Caco-2 (cell line): ENCODE measurements at regions of chr16 and their contacts with region 1.

Region 1: DNA sequence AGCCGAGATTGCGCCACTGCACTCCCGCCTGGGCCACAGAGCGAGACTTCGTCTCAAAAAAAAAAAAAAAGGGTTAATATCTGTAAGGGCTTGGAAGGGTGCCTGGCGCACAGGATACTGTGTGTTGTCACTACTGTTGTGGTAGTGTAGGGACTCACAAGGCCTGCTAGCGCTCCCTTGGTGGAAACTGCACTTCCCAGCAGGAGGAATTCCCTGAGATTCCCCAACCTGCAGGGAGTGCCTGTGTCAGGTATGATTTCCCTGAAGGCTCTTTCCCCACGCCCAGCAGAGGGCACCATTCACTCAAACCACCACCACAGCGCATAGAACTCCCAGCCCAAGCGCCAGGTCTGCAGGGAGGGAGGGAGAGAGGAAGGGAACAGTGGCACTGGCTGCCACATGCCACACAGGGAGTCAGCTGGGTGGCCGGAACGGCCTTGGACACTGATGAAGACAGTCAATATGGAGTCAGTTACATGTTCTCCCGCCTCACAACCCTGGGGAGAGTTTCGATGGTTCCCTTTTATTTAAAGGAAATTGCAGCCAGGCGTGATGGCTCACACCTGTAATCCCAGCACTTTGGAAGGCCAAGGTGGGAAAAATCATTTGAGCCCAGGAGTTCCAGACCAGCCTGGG is 32.7 kb upstream of the CDH1 start:
- DNase-seq: peak; percentile 93 to 94
- H3K4me3 ChIP-seq: no peak overlapping the region
- H3K4me3 Mint-ChIP-seq: no peak overlapping the region
- H3K27ac Mint-ChIP-seq: peak overlapping the region; percentile 49
- H3K4me1 ChIP-seq: peaks cover 19% of the 10 kb centered on the region
- H3K4me1 Mint-ChIP-seq: peaks cover 21% of the 10 kb centered on the region
- H3K27me3 ChIP-seq: no peaks in the 10 kb centered on the region
- H3K27me3 Mint-ChIP-seq: no peaks in the 10 kb centered on the region
- CTCF ChIP-seq: peak; percentile 92 to 97

Region 2: DNA sequence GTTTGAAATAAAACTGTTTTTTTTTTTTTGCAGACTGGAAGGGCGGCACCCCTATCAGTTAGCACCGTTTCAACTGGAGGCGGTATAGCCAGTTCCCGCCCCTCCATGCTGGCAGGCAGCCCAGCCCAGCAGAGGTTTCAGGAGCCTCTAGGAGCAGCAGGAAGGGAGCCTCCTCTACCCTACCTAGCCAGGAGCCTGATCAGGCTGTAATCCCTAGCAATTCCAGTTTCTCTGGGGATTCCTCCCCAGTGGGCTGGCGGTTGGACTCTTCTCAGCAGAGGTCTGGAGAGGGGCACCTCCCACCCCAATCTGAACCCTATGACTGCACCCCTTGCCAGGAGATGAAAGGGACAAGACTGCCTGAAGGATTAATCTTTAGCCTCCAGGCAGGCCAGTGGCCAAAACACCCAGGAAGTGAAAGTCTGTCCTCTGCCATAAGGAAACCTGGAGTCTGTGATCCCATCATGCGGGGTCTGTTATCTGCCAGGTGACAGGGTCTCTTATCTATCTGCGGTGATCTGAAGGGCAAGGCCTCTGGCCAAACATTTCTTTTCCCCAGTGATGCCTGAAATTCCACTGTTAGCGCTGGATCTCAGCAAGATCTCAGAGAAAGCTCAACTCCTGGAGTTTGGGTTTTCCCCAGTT is 27.8 kb after region 1 on chr16:
- CTCF ChIA-PET with region 1: interaction called, 3 read pairs
- POLR2A ChIA-PET with region 1: interaction called, 5 read pairs
- intact Hi-C with region 1: loop called (anchors 1 kb)
- DNase-seq: peak; percentile 93 to 97
- H3K4me3 ChIP-seq: no peak overlapping the region
- H3K4me3 Mint-ChIP-seq: peak overlapping the region; percentile 62
- H3K27ac Mint-ChIP-seq: peak overlapping the region; percentile 94
- H3K4me1 ChIP-seq: peaks cover 34% of the 10 kb centered on the region
- H3K4me1 Mint-ChIP-seq: peaks cover 34% of the 10 kb centered on the region
- H3K27me3 ChIP-seq: no peaks in the 10 kb centered on the region
- H3K27me3 Mint-ChIP-seq: no peaks in the 10 kb centered on the region
- CTCF ChIP-seq: peak in 1 of 2 experiments; percentile 1

Region 3: DNA sequence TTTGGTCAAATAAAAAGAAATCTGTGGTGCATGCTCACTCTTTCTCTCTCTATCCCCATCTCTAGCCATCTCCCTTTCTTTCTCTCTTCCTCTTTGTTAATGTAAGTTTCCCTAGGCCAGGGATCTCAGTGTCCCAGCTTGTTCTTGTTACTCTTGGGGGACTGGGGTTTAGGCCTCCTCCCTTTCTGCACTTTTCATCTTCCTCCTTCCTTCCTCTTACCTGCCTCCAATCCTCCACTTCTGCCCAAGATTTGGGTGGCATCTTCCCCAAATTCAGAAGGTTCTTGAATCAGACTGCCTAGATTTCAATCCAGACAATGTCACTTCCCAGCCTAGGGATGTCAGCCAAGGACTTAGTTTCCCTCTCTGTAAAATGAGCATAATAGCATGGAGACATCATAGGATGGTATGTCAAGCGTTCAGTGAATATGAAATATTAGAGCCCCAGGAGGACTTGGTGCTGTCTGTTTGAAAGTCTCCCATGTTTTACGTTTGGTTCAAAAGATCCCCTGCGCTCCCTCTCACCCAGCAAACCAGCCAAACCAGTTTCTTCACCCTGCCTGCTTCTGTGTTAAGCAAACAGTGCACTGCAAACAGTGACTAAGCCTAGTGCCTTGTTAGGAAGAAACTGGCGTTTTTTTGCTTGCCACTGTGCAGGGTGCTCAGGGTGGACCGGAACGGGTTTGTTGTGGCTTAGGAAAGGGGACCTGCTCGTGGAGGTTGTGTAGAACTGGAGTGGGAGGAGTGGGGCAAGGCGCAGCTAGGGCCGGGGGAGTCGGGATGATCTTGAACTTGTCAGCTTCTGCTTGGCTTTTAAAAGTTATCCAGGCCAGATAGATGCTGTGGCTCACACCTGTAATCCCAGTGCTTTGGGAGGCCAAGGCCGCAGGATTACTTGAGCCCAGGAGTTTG is 40.3 kb after region 1 on chr16:
- CTCF ChIA-PET with region 1: interaction called, 3 read pairs
- POLR2A ChIA-PET with region 1: interaction called, 6 read pairs
- intact Hi-C with region 1: loop called (anchors 1 kb)
- DNase-seq: peak; percentile 96
- H3K4me3 ChIP-seq: peak overlapping the region; percentile 13; the same call in 1 of the 2 replicates
- H3K4me3 Mint-ChIP-seq: peak overlapping the region; percentile 70
- H3K27ac Mint-ChIP-seq: peak overlapping the region; percentile 93
- H3K4me1 ChIP-seq: peaks cover 92% of the 10 kb centered on the region
- H3K4me1 Mint-ChIP-seq: peaks cover 74% of the 10 kb centered on the region
- H3K27me3 ChIP-seq: no peaks in the 10 kb centered on the region
- H3K27me3 Mint-ChIP-seq: no peaks in the 10 kb centered on the region
- CTCF ChIP-seq: no peak

Region 4: DNA sequence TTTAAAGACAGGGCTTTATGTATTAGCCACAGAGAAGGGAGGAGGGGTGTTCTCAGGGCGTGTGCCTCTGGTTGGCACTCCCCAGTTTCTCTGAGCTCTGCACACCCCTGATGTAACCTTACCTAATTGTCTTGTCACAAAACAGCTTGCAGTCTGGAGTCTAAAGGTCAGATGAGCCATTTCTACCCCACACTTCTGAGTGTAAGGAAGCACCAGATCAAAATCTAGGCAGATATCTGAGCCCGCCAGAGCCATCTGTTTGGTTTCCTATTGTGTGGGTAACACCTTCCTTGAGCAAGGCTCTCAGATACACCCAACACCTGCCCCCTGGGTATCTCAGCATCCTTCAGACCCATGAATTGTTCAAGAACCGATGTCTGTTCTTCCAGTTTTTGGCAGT is 48.3 kb after region 1 on chr16:
- CTCF ChIA-PET with region 1: no interaction called
- POLR2A ChIA-PET with region 1: interaction called, 6 read pairs
- intact Hi-C with region 1: loop called (anchors 1 kb)
- DNase-seq: peak; percentile 61 to 66
- H3K4me3 ChIP-seq: no peak overlapping the region
- H3K4me3 Mint-ChIP-seq: peak overlapping the region; percentile 22
- H3K27ac Mint-ChIP-seq: peak overlapping the region; percentile 74
- H3K4me1 ChIP-seq: peaks cover 84% of the 10 kb centered on the region
- H3K4me1 Mint-ChIP-seq: peaks cover 56% of the 10 kb centered on the region
- H3K27me3 ChIP-seq: no peaks in the 10 kb centered on the region
- H3K27me3 Mint-ChIP-seq: no peaks in the 10 kb centered on the region
- CTCF ChIP-seq: no peak

Region 5: GRCh38 chr16:68778551-68779231 is 74.3 kb after region 1 on chr16:
- CTCF ChIA-PET with region 1: no interaction called
- POLR2A ChIA-PET with region 1: no interaction called
- intact Hi-C with region 1: loop called (anchors 1 kb)
- DNase-seq: peak in 1 of 2 experiments; percentile 53
- H3K4me3 ChIP-seq: no peak overlapping the region
- H3K4me3 Mint-ChIP-seq: no peak overlapping the region
- H3K27ac Mint-ChIP-seq: peak overlapping the region; percentile 71
- H3K4me1 ChIP-seq: peaks cover 36% of the 10 kb centered on the region
- H3K4me1 Mint-ChIP-seq: peaks cover 37% of the 10 kb centered on the region
- H3K27me3 ChIP-seq: no peaks in the 10 kb centered on the region
- H3K27me3 Mint-ChIP-seq: no peaks in the 10 kb centered on the region
- CTCF ChIP-seq: no peak

Region 6: GRCh38 chr16:68800257-68800875 is 96.0 kb after region 1 on chr16:
- CTCF ChIA-PET with region 1: interaction called, 3 read pairs
- POLR2A ChIA-PET with region 1: no interaction called
- intact Hi-C with region 1: loop called (anchors 1 kb)
- DNase-seq: peak; percentile 83 to 88
- H3K4me3 ChIP-seq: no peak overlapping the region
- H3K4me3 Mint-ChIP-seq: no peak overlapping the region
- H3K27ac Mint-ChIP-seq: peak overlapping the region; percentile 7
- H3K4me1 ChIP-seq: peaks cover 62% of the 10 kb centered on the region
- H3K4me1 Mint-ChIP-seq: peaks cover 18% of the 10 kb centered on the region
- H3K27me3 ChIP-seq: no peaks in the 10 kb centered on the region
- H3K27me3 Mint-ChIP-seq: no peaks in the 10 kb centered on the region
- CTCF ChIP-seq: peak; percentile 85 to 86

Region 7: GRCh38 chr16:68843482-68844210 is 139.3 kb after region 1 on chr16 and contains the start of gene TANGO6:
- CTCF ChIA-PET with region 1: no interaction called
- POLR2A ChIA-PET with region 1: no interaction called
- intact Hi-C with region 1: loop called (anchors 1 kb)
- DNase-seq: peak; percentile 88 to 91
- H3K4me3 ChIP-seq: peak within 1 kb of the TSS; percentile 91
- H3K4me3 Mint-ChIP-seq: peak within 1 kb of the TSS; percentile 70
- H3K27ac Mint-ChIP-seq: peak within 1 kb of the TSS; percentile 74
- H3K4me1 ChIP-seq: peaks cover 4% of the 10 kb centered on the region; the same call in 1 of the 2 replicates
- H3K4me1 Mint-ChIP-seq: peaks cover 6% of the 10 kb centered on the region
- H3K27me3 ChIP-seq: no peaks in the 10 kb centered on the region
- H3K27me3 Mint-ChIP-seq: no peaks in the 10 kb centered on the region
- CTCF ChIP-seq: peak; percentile 65 to 78
- total RNA-seq, gene TANGO6: 17.0 and 18.2 TPM in 2 replicates

Region 8: DNA sequence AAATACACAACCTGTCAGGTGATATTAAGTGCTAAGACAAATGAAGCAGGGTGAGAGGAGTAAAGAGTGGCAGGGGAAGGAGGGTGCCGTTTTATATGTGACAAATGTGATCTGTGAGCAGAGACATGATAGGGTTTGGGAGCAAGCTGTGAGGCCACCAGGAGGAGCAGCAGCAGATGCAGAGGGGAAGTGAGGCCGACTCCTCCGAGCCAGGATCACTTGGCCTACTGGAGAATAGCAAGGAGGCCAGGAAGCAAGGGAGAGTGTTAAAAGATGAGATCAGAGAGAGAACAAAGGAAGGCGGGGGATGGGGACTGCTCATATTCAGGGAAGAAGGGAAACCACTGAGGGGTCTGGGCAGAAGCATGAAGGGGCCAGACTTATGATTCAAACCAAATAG is 268.4 kb after region 1 on chr16:
- CTCF ChIA-PET with region 1: no interaction called
- POLR2A ChIA-PET with region 1: no interaction called
- intact Hi-C with region 1: no loop called
- DNase-seq: peak; percentile 54 to 61
- H3K4me3 ChIP-seq: no peak overlapping the region
- H3K4me3 Mint-ChIP-seq: no peak overlapping the region
- H3K27ac Mint-ChIP-seq: peak overlapping the region; percentile 5
- H3K4me1 ChIP-seq: peaks cover 16% of the 10 kb centered on the region
- H3K4me1 Mint-ChIP-seq: peaks cover 21% of the 10 kb centered on the region
- H3K27me3 ChIP-seq: no peaks in the 10 kb centered on the region
- H3K27me3 Mint-ChIP-seq: no peaks in the 10 kb centered on the region
- CTCF ChIP-seq: peak; percentile 39 to 66